ENCODE measurements at regions of chr7 and their contacts with region 1.

Region 1: DNA sequence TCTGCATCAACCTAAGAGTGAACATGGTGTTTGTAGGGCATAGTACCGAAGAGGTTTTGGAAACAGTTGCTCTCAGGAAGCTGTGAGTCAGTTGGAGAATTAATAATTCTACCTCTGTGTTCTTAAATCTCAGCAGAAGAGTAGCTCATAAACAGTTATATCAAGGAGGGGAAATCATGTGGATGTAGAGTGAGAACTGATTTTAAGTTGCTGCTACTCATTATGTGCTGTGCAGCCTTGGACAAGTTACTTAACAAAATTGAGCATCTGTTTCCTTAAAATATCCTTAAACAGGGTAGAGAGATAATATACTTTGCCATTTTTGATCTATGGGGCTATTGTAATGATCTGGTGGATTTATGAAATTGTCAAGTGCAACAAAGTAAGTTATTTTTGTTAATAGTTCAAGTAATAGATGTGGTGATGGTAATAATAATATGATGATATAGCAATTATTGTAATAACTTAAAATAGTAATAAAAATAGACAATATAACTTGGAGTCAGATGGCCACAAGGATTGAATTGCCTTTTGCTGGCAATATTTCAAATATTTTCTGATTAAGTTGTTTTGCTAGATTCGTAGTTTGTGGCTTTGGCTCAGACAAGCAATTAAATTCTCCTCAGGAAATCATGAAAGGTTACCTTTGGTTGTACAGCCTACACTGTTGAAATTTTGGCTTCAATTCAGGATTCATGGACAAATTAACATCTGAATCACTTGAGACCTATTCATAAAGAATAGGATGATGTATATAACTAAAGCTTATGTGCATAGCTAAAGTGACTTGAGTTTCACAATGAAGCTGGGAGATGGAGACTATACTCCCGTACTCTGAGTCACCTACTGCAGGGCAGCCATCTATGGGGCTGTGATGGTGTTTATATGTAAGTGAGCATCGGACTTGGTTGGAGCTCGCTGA is 228.5 kb downstream of the CDK14 start:
- DNase-seq: no peak
- ATAC-seq: no peak
- H3K4me3 ChIP-seq: no peak overlapping the region
- H3K27ac ChIP-seq: peak overlapping the region in 1 of 10 donors; percentile 69
- H3K4me1 ChIP-seq: peaks cover 0 to 23% (median 4%) of the 10 kb centered on the region in 9 donors
- H3K27me3 ChIP-seq: no peaks in the 10 kb centered on the region
- CTCF ChIP-seq: no peak

Region 2: DNA sequence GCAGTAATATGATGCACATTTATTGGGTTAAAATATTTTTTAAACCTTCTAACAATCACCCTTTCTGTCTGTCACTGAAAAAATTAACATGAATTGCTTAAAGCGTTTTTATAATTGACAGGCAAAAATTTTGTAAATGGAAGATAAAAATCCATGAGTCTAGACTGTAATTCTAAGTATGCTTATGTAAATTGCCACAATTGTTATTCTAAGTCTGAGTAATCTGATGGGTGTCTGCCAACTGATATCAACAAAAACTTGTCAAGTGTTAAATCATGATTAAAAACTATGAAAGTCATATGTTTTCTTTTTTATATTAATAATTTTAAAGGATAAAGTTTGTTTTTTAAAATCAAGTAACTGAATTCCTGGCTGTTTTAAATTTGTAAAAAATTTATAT is 20.3 kb before region 1 on chr7:
- intact Hi-C with region 1: loop called in 1 of 10 experiments (anchors 1 kb)
- DNase-seq: no peak
- ATAC-seq: no peak
- H3K4me3 ChIP-seq: no peak overlapping the region
- H3K27ac ChIP-seq: no peak overlapping the region
- H3K4me1 ChIP-seq: no peaks in the 10 kb centered on the region
- H3K27me3 ChIP-seq: no peaks in the 10 kb centered on the region
- CTCF ChIP-seq: no peak

Region 3: GRCh38 chr7:90857603-90858002 is 33.0 kb after region 1 on chr7:
- intact Hi-C with region 1: no loop called
- DNase-seq: peak in 1 of 2 donors; percentile 21
- ATAC-seq: peak in 7 of 8 donors; percentile 34 to 84 (median 59)
- H3K4me3 ChIP-seq: no peak overlapping the region
- H3K27ac ChIP-seq: no peak overlapping the region
- H3K4me1 ChIP-seq: peaks cover 0 to 6% (median 0%) of the 10 kb centered on the region in 9 donors
- H3K27me3 ChIP-seq: no peaks in the 10 kb centered on the region
- CTCF ChIP-seq: peak in 4 of 9 donors; percentile 16 to 46 (median 38)